OCI-LY7 (cell line): ENCODE measurements at regions of chr3 and their contacts with region 1.

Region 1: GRCh38 chr3:143674100-143674968 is 173.9 kb downstream of the SLC9A9 start:
- DNase-seq: peak; percentile 69
- H3K4me3 ChIP-seq: no peak overlapping the region
- H3K27ac ChIP-seq: no peak overlapping the region
- H3K4me1 ChIP-seq: peaks cover 3% of the 10 kb centered on the region
- CTCF ChIP-seq: peak; percentile 95

Region 2: GRCh38 chr3:143236226-143236964 is 437.9 kb before region 1 on chr3:
- CTCF ChIA-PET with region 1: no interaction called
- POLR2A ChIA-PET with region 1: no interaction called
- intact Hi-C with region 1: loop called (anchors 10 kb)
- DNase-seq: peak; percentile 45
- H3K4me3 ChIP-seq: no peak overlapping the region
- H3K27ac ChIP-seq: no peak overlapping the region
- H3K4me1 ChIP-seq: peaks cover 11% of the 10 kb centered on the region
- CTCF ChIP-seq: no peak

Region 3: DNA sequence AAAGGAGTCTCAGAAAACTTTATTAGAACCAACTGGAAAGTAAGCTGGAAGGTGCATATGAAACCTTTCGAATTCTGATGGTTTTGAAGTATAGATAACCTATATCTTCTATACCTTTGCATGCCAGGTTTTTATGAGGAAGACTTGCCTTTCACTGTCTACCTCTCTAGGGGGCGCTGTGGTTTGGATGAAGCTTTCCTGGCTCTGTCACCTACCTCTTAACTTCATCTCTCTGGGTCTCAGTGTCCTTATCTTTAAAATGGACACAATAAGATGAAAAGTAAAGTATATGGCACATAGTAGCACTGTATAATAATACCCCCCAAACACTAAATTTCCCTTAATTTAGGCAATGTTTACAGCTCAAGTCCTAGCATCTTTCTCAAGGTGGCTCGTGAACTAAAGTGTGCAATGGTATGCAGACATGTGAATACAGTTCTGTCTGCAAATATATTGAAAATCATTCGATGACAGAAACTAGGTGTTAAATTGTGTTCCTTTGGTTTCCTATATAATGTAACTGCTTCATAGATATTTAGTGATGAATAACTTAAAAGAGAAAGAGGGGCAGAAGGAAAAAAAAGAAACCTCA is 240.5 kb before region 1 on chr3:
- CTCF ChIA-PET with region 1: no interaction called
- POLR2A ChIA-PET with region 1: no interaction called
- intact Hi-C with region 1: loop called (anchors 5 kb)
- DNase-seq: peak; percentile 15
- H3K4me3 ChIP-seq: no peak overlapping the region
- H3K27ac ChIP-seq: no peak overlapping the region
- H3K4me1 ChIP-seq: no peaks in the 10 kb centered on the region
- CTCF ChIP-seq: peak; percentile 80